CD8-positive, alpha-beta T cell (primary cell): ENCODE measurements at regions of chr6 and their contacts with region 1.

Region 1: GRCh38 chr6:149717588-149718458 is at the start of gene LATS1:
- DNase-seq: peak; percentile 79 to 96 (median 91)
- ATAC-seq: peak; percentile 89
- H3K4me3 ChIP-seq: peak within 1 kb of the TSS; percentile 66 to 91
- H3K4me3 Mint-ChIP-seq: peak within 1 kb of the TSS; percentile 86
- H3K27ac ChIP-seq: peak within 1 kb of the TSS; percentile 86 to 94
- H3K27ac Mint-ChIP-seq: peak within 1 kb of the TSS; percentile 96
- H3K4me1 ChIP-seq: peaks cover 27% of the 10 kb centered on the region
- H3K4me1 Mint-ChIP-seq: peaks cover 43% of the 10 kb centered on the region
- H3K27me3 ChIP-seq: peaks cover 0 to 2% of the 10 kb centered on the region in 2 experiments
- H3K27me3 Mint-ChIP-seq: no peaks in the 10 kb centered on the region
- CTCF ChIP-seq: no peak
- total RNA-seq, gene LATS1: 37.2 to 39.1 TPM

Region 2: DNA sequence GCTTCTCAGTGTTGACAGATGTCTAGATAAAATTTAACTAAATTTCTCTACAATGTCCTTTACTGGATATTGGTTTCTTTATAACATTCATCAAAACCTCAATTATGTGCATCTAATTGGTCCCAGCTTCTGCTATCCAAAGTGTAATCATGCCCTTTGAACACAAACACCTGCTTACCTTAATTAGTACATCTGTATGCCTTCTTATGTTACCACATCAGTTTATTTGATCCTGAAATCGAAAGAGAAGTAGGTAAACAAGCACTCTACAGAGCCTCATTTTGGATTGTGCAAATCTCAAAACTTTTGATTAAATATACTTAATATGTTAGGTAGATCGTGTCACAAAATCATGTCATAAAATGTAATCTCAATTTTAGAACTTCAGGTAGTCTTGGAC is 363.8 kb before region 1 on chr6:
- CTCF ChIA-PET with region 1: no interaction called
- POLR2A ChIA-PET with region 1: no interaction called
- intact Hi-C with region 1: no loop called
- DNase-seq: no peak
- ATAC-seq: peak; percentile 34
- H3K4me3 ChIP-seq: no peak overlapping the region
- H3K4me3 Mint-ChIP-seq: no peak overlapping the region
- H3K27ac ChIP-seq: no peak overlapping the region
- H3K27ac Mint-ChIP-seq: no peak overlapping the region
- H3K4me1 ChIP-seq: peaks cover 34% of the 10 kb centered on the region
- H3K4me1 Mint-ChIP-seq: peaks cover 72% of the 10 kb centered on the region
- H3K27me3 ChIP-seq: no peaks in the 10 kb centered on the region
- H3K27me3 Mint-ChIP-seq: no peaks in the 10 kb centered on the region
- CTCF ChIP-seq: no peak

Region 3: GRCh38 chr6:149565527-149566409 is 152.1 kb before region 1 on chr6 and contains the start of gene GINM1:
- CTCF ChIA-PET with region 1: no interaction called
- POLR2A ChIA-PET with region 1: interaction called, 4 read pairs
- intact Hi-C with region 1: loop called (anchors 1 to 2 kb)
- DNase-seq: peak; percentile 91 to 97 (median 94)
- ATAC-seq: peak; percentile 83
- H3K4me3 ChIP-seq: peak within 1 kb of the TSS; percentile 84 to 98
- H3K4me3 Mint-ChIP-seq: peak within 1 kb of the TSS; percentile 88
- H3K27ac ChIP-seq: peak within 1 kb of the TSS; percentile 75 to 88
- H3K27ac Mint-ChIP-seq: peak within 1 kb of the TSS; percentile 95
- H3K4me1 ChIP-seq: peaks cover 7% of the 10 kb centered on the region
- H3K4me1 Mint-ChIP-seq: peaks cover 18% of the 10 kb centered on the region
- H3K27me3 ChIP-seq: no peaks in the 10 kb centered on the region
- H3K27me3 Mint-ChIP-seq: no peaks in the 10 kb centered on the region
- CTCF ChIP-seq: peak; percentile 78
- total RNA-seq, gene GINM1: 32.7 to 35.2 TPM

Region 4: DNA sequence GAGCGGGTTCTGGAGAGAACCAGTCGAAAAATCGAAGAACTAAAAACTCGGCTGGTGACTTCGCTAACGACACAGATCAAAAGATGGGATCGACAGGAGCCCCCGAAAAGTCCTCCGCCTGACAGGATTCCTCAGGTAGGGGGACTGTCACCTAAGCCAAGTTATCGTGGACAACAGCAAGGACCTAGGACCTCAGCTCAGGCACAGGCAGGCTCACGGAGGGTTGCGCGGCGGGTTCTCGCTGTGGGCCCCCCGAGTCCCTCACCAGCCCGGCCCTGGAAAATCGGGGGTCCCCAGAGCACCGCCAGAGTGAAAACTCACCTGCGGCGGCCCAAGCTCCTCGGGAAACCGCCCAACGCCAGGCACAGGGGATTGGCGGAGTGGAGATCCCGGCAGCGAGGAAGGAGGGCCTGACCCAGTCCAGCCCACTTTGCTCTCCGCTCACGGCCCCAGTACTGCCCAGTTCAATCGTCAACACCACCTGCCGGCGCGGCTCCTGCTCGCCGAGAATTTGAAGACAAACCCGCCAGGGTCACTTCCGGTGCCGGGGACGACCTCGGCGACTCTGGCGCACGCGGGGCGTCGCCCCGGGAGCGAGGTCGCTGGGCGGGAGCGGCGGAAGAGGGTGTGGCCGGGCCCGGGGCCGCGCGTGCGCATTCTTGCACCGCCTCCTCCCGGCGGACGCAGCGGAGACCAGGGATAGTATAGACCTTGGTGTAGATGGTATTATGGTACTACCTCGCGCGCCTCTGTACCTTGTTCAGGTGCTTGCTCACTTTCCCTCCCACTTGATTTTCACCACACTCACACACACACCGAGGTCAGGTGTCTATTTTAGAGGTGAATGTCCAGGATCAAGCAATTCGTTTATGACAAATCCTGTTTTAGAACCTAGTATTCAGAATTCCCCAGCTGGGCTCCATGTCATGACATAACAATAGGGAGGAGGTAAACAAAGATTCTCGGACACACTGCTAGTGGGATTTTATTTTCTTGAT is 69.4 kb before region 1 on chr6 and contains the start of gene KATNA1:
- CTCF ChIA-PET with region 1: no interaction called
- POLR2A ChIA-PET with region 1: no interaction called
- intact Hi-C with region 1: loop called in 1 of 2 experiments (anchors 1 kb)
- DNase-seq: peak; percentile 65 to 91 (median 84)
- ATAC-seq: peak; percentile 91
- H3K4me3 ChIP-seq: peak within 1 kb of the TSS; percentile 78 to 97
- H3K4me3 Mint-ChIP-seq: peak within 1 kb of the TSS; percentile 90
- H3K27ac ChIP-seq: peak within 1 kb of the TSS; percentile 77 to 90
- H3K27ac Mint-ChIP-seq: peak within 1 kb of the TSS; percentile 63
- H3K4me1 ChIP-seq: peaks cover 30% of the 10 kb centered on the region
- H3K4me1 Mint-ChIP-seq: peaks cover 37% of the 10 kb centered on the region
- H3K27me3 ChIP-seq: no peaks in the 10 kb centered on the region
- H3K27me3 Mint-ChIP-seq: no peaks in the 10 kb centered on the region
- CTCF ChIP-seq: no peak
- total RNA-seq, gene KATNA1: 18.0 to 20.8 TPM

Region 5: GRCh38 chr6:149701714-149702113 is 16.1 kb before region 1 on chr6:
- CTCF ChIA-PET with region 1: interaction called, 5 read pairs
- POLR2A ChIA-PET with region 1: interaction called, 6 read pairs
- intact Hi-C with region 1: loop called in 1 of 2 experiments (anchors 1 kb)
- DNase-seq: no peak
- ATAC-seq: no peak
- H3K4me3 ChIP-seq: no peak overlapping the region
- H3K4me3 Mint-ChIP-seq: no peak overlapping the region
- H3K27ac ChIP-seq: no peak overlapping the region
- H3K27ac Mint-ChIP-seq: no peak overlapping the region
- H3K4me1 ChIP-seq: peaks cover 16% of the 10 kb centered on the region
- H3K4me1 Mint-ChIP-seq: peaks cover 61% of the 10 kb centered on the region
- H3K27me3 ChIP-seq: no peaks in the 10 kb centered on the region
- H3K27me3 Mint-ChIP-seq: no peaks in the 10 kb centered on the region
- CTCF ChIP-seq: no peak

Region 6: GRCh38 chr6:149863697-149864577 is 146.1 kb after region 1 on chr6 and contains the start of gene LRP11:
- CTCF ChIA-PET with region 1: no interaction called
- POLR2A ChIA-PET with region 1: no interaction called
- intact Hi-C with region 1: loop called (anchors 2 to 5 kb)
- DNase-seq: peak; percentile 65 to 87 (median 77)
- ATAC-seq: peak; percentile 90
- H3K4me3 ChIP-seq: peak within 1 kb of the TSS; percentile 38 to 60
- H3K4me3 Mint-ChIP-seq: peak within 1 kb of the TSS; percentile 85
- H3K27ac ChIP-seq: peak within 1 kb of the TSS in 1 of 2 experiments; percentile 18
- H3K27ac Mint-ChIP-seq: no peak within 1 kb of the TSS
- H3K4me1 ChIP-seq: peaks cover 7% of the 10 kb centered on the region
- H3K4me1 Mint-ChIP-seq: peaks cover 11% of the 10 kb centered on the region
- H3K27me3 ChIP-seq: peaks cover 3 to 4% of the 10 kb centered on the region in 2 experiments
- H3K27me3 Mint-ChIP-seq: peaks cover 34% of the 10 kb centered on the region
- CTCF ChIP-seq: no peak
- total RNA-seq, gene LRP11: 0.17 TPM in 1 of 2 experiments, not detected in the other